Cardiac septum (tissue), 1 donor: ENCODE measurements at regions of chr1 and their contacts with region 1.

Region 1: DNA sequence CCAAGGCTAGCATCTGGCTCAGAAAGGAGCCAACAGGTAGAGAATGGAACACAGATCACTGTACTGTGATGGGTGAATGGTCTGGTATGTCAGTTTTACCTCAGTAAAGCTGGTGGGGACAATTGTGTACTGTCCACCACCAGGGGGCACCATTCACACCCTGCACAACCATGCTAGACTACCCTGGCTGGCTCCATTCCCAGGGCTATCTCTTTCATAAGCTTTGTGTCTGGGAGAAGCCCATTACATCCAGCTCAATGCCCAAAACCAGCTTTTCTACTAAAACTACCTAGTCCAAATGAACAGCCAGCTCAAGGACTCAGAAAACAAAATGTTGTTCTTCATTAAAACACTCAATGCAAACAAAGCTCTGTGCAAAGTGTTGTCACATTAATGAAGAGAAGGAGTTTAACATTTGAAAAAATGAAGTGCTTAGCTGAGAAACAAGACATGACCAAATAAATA is 62.0 kb upstream of the RASAL2 start:
- DNase-seq: peak; percentile 89

Region 2: GRCh38 chr1:177884479-177885021 is 147.3 kb before region 1 on chr1:
- intact Hi-C with region 1: no loop called
- DNase-seq: no peak

Region 3: GRCh38 chr1:178189814-178190213 is 157.9 kb after region 1 on chr1:
- intact Hi-C with region 1: loop called (anchors 5 kb)
- DNase-seq: no peak

Region 4: GRCh38 chr1:178282949-178283367 is 251.1 kb after region 1 on chr1:
- intact Hi-C with region 1: loop called (anchors 5 kb)
- DNase-seq: no peak